ENCODE measurements at regions of chr15 and their contacts with region 1.

Region 1: DNA sequence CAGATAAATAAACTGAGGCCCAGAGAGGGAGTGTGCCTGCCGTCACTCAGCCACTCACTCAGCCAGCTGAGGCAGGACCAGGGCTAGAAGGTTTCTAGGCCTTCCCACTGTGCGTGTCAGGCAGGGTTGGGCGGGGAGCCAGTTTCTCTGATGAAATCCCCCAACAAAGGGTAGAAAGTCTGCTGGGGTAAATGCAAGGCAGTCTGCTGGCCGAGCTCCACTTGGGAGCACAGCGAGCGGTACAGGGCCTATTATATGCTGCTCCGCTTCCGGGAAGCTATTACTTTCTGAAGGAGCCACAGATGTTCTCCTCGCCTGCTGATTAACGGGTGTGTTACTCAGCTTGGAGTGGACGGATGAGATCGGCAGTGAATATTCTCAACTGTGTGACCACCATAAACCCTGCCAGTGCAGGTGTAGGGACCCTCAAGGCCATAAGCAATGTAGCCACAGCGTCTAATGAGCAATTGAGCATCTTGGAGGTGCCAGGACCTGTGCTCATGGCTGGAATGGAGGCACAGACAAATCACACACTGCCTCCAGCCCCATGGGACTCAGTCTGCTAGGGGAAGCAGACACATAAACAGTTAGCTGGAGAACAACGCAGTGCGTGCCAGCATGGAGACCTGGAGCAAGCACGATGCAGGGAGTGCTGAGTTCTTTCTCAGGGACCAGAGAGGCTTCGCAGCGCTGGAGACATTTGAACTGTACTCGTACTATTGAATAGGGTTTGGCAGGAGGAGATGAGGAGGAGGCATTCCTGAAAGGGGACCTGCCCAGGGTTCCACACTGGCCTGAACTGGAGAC is 42.1 kb downstream of the CORO2B start:
- DNase-seq: peak; percentile 98
- ATAC-seq: peak; percentile 89
- H3K4me3 ChIP-seq: no peak overlapping the region
- H3K27ac ChIP-seq: peak overlapping the region; percentile 83
- H3K4me1 ChIP-seq: peaks cover 34% of the 10 kb centered on the region
- H3K27me3 ChIP-seq: no peaks in the 10 kb centered on the region
- CTCF ChIP-seq: no peak
- POLR2A ChIP-seq: peak; percentile 70
- RAD21 ChIP-seq: no peak; the same call in none of the 2 replicates

Region 2: DNA sequence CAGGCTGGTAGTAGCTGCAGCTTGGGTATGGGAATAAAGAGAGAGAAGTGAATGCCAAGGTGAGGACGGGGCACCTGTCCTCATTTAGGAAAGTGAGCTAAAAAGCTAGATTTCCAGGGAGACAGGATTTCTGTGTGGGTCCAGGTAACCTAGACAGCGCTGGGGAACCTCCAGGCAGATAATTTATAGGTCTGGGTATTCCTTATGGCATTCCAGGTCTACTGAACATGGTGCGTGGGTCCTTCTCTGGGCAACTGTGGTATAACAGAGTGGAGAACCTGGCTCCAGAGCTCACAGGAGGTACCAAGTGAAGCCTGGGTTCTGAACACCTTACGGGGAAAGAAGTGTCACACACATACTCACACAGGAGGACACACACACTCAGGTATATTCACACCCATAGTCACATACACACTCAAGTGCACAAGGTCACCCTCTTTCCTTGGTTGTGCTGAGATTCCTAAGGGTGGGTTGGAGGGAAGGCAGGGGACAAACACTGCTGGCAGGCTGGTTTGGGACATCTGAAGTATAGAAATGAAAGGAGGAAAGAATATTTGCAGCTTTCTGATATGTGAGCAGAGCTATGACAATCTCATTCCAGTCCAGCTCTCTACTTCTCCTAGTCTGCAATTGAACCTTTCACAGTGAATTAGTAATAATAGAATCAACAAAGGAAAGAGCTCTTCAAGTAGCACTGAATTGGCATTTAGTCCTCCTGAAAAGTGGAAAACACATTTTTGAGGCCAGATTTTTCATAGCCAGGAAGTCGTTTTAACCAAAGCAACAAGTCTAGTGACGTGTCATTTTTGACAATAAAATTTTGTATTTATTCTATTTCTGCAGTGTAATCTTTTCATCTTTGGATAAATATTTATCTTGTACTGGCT is 151.5 kb before region 1 on chr15:
- CTCF ChIA-PET with region 1: no interaction called
- POLR2A ChIA-PET with region 1: no interaction called
- dilution Hi-C with region 1: no loop called
- in situ Hi-C with region 1: no loop called
- intact Hi-C with region 1: no loop called
- DNase-seq: no peak
- ATAC-seq: no peak
- H3K4me3 ChIP-seq: no peak overlapping the region
- H3K27ac ChIP-seq: no peak overlapping the region
- H3K4me1 ChIP-seq: no peaks in the 10 kb centered on the region; the same call in 1 of the 2 replicates
- H3K27me3 ChIP-seq: peaks cover 23% of the 10 kb centered on the region
- CTCF ChIP-seq: no peak
- POLR2A ChIP-seq: no peak
- RAD21 ChIP-seq: no peak

Region 3: DNA sequence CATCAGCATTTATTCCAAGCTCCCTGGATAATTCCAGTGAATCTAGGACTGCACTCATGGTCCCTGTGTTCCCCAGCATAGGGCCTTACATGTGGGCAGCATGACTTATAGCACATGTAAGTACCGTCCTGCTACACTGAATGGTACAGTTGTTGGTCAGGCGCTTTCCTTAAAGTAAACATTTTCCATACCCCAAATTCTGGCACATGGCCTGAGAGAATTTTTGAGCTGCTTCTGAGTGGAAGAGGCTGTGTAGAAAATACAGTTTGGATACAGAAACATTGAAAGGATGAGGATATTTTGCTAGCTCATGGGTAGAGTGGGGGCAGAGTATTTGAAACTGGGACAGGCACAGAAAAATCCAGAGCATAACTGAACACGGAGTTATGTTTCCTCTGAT is 14.5 kb before region 1 on chr15:
- CTCF ChIA-PET with region 1: no interaction called
- POLR2A ChIA-PET with region 1: interaction called, 9 read pairs
- dilution Hi-C with region 1: no loop called
- in situ Hi-C with region 1: no loop called
- intact Hi-C with region 1: loop called (anchors 2 kb)
- DNase-seq: peak; percentile 63
- ATAC-seq: peak; percentile 68
- H3K4me3 ChIP-seq: no peak overlapping the region
- H3K27ac ChIP-seq: peak overlapping the region; percentile 73; the same call in 1 of the 2 replicates
- H3K4me1 ChIP-seq: peaks cover 28% of the 10 kb centered on the region
- H3K27me3 ChIP-seq: no peaks in the 10 kb centered on the region
- CTCF ChIP-seq: no peak
- POLR2A ChIP-seq: no peak
- RAD21 ChIP-seq: no peak

Region 4: GRCh38 chr15:69104050-69104750 is 483.3 kb after region 1 on chr15:
- CTCF ChIA-PET with region 1: no interaction called
- POLR2A ChIA-PET with region 1: no interaction called
- dilution Hi-C with region 1: no loop called
- in situ Hi-C with region 1: no loop called
- intact Hi-C with region 1: no loop called
- DNase-seq: no peak
- ATAC-seq: no peak
- H3K4me3 ChIP-seq: no peak overlapping the region
- H3K27ac ChIP-seq: no peak overlapping the region
- H3K4me1 ChIP-seq: no peaks in the 10 kb centered on the region
- H3K27me3 ChIP-seq: peaks cover 71% of the 10 kb centered on the region
- CTCF ChIP-seq: no peak
- POLR2A ChIP-seq: no peak
- RAD21 ChIP-seq: no peak